ENCODE measurements at regions of chr20 and their contacts with region 1.

Region 1: GRCh38 chr20:11267131-11267761 is 593.4 kb upstream of the JAG1 start:
- DNase-seq: peak; percentile 44 to 80
- H3K4me3 ChIP-seq: no peak overlapping the region
- H3K4me3 Mint-ChIP-seq: peak overlapping the region; percentile 56
- H3K27ac Mint-ChIP-seq: peak overlapping the region; percentile 79
- H3K4me1 ChIP-seq: peaks cover 48% of the 10 kb centered on the region
- H3K4me1 Mint-ChIP-seq: peaks cover 52% of the 10 kb centered on the region
- H3K27me3 ChIP-seq: no peaks in the 10 kb centered on the region
- H3K27me3 Mint-ChIP-seq: no peaks in the 10 kb centered on the region
- CTCF ChIP-seq: no peak

Region 2: DNA sequence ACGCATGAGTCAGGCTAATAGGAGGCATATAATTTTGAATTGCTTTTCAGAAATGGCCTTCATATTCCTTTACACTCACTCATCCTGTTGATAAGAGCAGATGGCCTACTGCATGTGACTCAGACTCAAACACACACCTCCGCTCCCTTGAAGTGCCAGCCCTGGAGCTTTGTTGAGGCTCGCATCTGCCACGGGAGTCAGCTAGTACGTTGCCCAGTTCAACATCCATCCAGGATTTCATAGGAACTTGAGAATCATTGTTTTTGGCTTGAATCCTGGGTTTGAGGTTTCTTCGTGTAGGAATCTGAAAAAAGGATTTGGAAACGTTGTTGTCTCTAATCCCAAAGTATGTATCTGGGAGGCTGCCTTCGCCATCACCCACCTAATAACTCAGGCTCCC is 506.0 kb before region 1 on chr20:
- CTCF ChIA-PET with region 1: no interaction called
- POLR2A ChIA-PET with region 1: no interaction called
- intact Hi-C with region 1: no loop called
- DNase-seq: no peak
- H3K4me3 ChIP-seq: no peak overlapping the region
- H3K4me3 Mint-ChIP-seq: no peak overlapping the region
- H3K27ac Mint-ChIP-seq: no peak overlapping the region
- H3K4me1 ChIP-seq: no peaks in the 10 kb centered on the region
- H3K4me1 Mint-ChIP-seq: no peaks in the 10 kb centered on the region
- H3K27me3 ChIP-seq: no peaks in the 10 kb centered on the region
- H3K27me3 Mint-ChIP-seq: no peaks in the 10 kb centered on the region
- CTCF ChIP-seq: no peak

Region 3: DNA sequence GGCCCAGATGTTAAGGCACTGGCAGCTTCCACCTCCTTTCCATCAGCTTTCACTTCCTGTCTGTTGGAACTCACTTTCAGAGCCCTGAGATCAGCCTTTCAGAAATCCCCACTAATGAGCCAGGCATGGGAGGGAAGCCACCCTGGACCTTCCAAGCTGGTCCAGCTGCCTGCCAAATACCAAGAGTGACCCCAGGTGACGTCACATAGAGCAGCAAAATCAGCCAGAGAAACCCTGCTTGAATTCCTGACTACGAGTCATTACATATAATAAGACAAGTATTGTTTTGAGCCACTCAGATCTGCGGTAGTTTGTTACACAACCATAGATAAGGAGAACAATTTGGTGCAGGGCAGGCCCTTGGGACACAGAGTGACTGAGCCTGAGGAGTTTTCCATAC is 37.5 kb before region 1 on chr20:
- CTCF ChIA-PET with region 1: no interaction called
- POLR2A ChIA-PET with region 1: no interaction called
- intact Hi-C with region 1: loop called (anchors 5 kb)
- DNase-seq: peak; percentile 69 to 73
- H3K4me3 ChIP-seq: no peak overlapping the region
- H3K4me3 Mint-ChIP-seq: no peak overlapping the region
- H3K27ac Mint-ChIP-seq: peak overlapping the region; percentile 40
- H3K4me1 ChIP-seq: peaks cover 12% of the 10 kb centered on the region
- H3K4me1 Mint-ChIP-seq: peaks cover 7% of the 10 kb centered on the region
- H3K27me3 ChIP-seq: no peaks in the 10 kb centered on the region
- H3K27me3 Mint-ChIP-seq: no peaks in the 10 kb centered on the region
- CTCF ChIP-seq: no peak